ENCODE measurements at regions of chr11 and their contacts with region 1.

Region 1: DNA sequence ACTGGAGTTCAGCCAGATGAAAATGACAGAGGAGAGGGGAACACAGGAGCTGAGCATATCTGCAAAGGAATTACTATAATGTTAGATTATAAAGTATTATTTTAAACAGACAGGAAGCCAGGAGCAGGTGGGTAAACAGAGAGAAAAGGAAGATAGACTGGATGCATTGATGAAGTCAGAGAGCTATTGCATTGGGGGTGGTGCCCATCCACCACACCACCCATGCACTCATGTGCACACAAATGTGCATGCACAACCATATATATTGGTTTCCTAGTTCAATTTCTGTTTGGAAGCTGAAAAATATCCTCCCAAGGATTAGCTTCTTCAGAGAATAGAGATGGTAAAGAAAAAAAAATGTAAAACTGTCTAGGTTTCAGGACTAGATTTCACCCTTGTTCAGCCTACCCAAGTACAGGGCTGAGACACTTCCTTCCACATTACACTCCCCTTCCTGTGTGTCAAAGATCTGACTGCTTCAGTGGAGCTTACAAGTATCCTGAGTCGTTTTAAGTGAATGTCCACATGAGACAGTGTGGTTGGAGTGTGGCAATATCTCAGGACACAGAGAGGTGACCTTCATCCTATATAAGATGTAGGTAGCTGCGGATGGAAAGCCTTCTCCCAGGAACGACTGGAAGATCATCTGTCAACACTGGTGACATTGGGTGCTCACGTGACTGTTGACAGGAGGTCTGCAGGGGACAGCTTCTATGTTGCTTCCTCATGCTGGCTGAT is 12.2 kb upstream of the SMPD1 start:
- DNase-seq: peak in 1 of 5 donors; percentile 37
- H3K4me3 ChIP-seq: peak overlapping the region; percentile 32
- H3K4me3 Mint-ChIP-seq: peak overlapping the region in 2 of 7 donors; percentile 52 to 60
- H3K27ac ChIP-seq: no peak overlapping the region
- H3K27ac Mint-ChIP-seq: peak overlapping the region in 3 of 8 donors; percentile 51 to 78 (median 56)
- H3K4me1 ChIP-seq: peaks cover 21% of the 10 kb centered on the region
- H3K4me1 Mint-ChIP-seq: peaks cover 14 to 22% (median 17%) of the 10 kb centered on the region in 3 donors
- H3K27me3 ChIP-seq: no peaks in the 10 kb centered on the region
- H3K27me3 Mint-ChIP-seq: no peaks in the 10 kb centered on the region

Region 2: GRCh38 chr11:6353367-6353987 is 24.6 kb before region 1 on chr11:
- CTCF ChIA-PET with region 1: interaction called, 10 read pairs
- POLR2A ChIA-PET with region 1: no interaction called
- DNase-seq: peak; percentile 23 to 65 (median 35)
- H3K4me3 ChIP-seq: no peak overlapping the region
- H3K4me3 Mint-ChIP-seq: peak overlapping the region in 1 of 7 donors; percentile 28
- H3K27ac ChIP-seq: no peak overlapping the region
- H3K27ac Mint-ChIP-seq: no peak overlapping the region
- H3K4me1 ChIP-seq: no peaks in the 10 kb centered on the region
- H3K4me1 Mint-ChIP-seq: peaks cover 0 to 3% (median 0%) of the 10 kb centered on the region in 3 donors
- H3K27me3 ChIP-seq: no peaks in the 10 kb centered on the region
- H3K27me3 Mint-ChIP-seq: peaks cover 0 to 3% of the 10 kb centered on the region in 2 donors

Region 3: DNA sequence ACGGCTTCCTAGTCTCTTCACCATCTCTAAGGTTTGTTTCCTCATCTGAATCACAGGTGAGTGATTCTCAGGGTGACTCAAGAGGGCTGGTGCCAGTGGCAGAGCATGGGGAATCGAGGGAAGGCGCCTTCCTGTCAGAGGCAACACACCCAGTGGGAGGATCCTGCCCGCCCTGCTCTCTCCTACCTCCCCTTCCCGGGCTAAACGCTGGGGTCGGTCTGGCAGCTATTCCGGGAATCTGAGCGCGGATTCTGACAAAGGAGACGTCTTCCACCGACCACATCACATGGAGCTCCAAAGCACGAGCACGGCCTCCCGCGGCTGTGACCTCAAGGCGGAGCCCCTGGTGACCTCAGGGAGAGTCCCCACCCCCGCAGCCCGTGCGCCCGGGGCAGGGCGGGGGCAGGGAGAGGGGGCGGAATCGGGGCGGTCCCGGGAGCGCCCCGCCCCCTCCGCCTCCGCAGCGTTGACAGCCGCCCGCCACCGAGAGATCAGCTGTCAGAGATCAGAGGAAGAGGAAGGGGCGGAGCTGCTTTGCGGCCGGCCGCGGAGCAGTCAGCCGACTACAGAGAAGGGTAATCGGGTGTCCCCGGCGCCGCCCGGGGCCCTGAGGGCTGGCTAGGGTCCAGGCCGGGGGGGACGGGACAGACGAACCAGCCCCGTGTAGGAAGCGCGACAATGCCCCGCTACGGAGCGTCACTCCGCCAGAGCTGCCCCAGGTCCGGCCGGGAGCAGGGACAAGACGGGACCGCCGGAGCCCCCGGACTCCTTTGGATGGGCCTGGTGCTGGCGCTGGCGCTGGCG is 12.1 kb after region 1 on chr11 and contains the start of gene SMPD1:
- CTCF ChIA-PET with region 1: interaction called, 51 read pairs
- POLR2A ChIA-PET with region 1: interaction called, 3 read pairs
- DNase-seq: peak; percentile 91 to 97 (median 93)
- H3K4me3 ChIP-seq: peak within 1 kb of the TSS; percentile 64
- H3K4me3 Mint-ChIP-seq: peak within 1 kb of the TSS; percentile 85 to 96 (median 93)
- H3K27ac ChIP-seq: peak within 1 kb of the TSS; percentile 71
- H3K27ac Mint-ChIP-seq: peak within 1 kb of the TSS; percentile 89 to 100 (median 98)
- H3K4me1 ChIP-seq: peaks cover 48% of the 10 kb centered on the region
- H3K4me1 Mint-ChIP-seq: peaks cover 43 to 64% (median 47%) of the 10 kb centered on the region in 3 donors
- H3K27me3 ChIP-seq: no peaks in the 10 kb centered on the region
- H3K27me3 Mint-ChIP-seq: no peaks in the 10 kb centered on the region
- total RNA-seq, gene SMPD1: 30.4 to 30.9 TPM

Region 4: DNA sequence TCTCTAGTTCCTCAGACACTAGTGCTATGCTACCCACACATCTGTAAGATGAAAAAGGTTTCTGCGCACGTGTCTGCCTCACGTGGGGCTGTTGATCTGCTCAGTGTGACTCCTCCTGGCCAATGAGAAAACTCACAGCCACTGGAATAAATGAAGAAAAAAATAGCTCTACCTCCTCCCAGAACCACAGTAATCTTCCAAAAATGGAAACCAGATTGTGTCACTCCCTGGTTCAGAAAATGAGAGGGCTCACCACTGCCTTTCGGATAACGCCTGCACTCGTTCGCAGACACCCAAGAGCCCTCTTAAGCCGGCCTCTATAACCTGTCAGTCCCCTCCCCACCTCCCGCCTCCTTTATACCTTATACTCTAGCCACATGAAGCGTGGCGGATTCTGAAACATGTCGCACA is 35.7 kb after region 1 on chr11:
- CTCF ChIA-PET with region 1: interaction called, 25 read pairs
- POLR2A ChIA-PET with region 1: interaction called, 3 read pairs
- DNase-seq: peak in 3 of 5 donors; percentile 36 to 86 (median 64)
- H3K4me3 ChIP-seq: peak overlapping the region; percentile 43
- H3K4me3 Mint-ChIP-seq: no peak overlapping the region
- H3K27ac ChIP-seq: no peak overlapping the region
- H3K27ac Mint-ChIP-seq: peak overlapping the region in 2 of 8 donors; percentile 37 to 85
- H3K4me1 ChIP-seq: peaks cover 79% of the 10 kb centered on the region
- H3K4me1 Mint-ChIP-seq: peaks cover 13 to 35% (median 20%) of the 10 kb centered on the region in 3 donors
- H3K27me3 ChIP-seq: no peaks in the 10 kb centered on the region
- H3K27me3 Mint-ChIP-seq: no peaks in the 10 kb centered on the region

Region 5: GRCh38 chr11:6431861-6432260 is 53.8 kb after region 1 on chr11:
- CTCF ChIA-PET with region 1: interaction called, 467 read pairs
- POLR2A ChIA-PET with region 1: no interaction called
- DNase-seq: no peak
- H3K4me3 ChIP-seq: no peak overlapping the region
- H3K4me3 Mint-ChIP-seq: no peak overlapping the region
- H3K27ac ChIP-seq: no peak overlapping the region
- H3K27ac Mint-ChIP-seq: peak overlapping the region in 1 of 8 donors; percentile 35
- H3K4me1 ChIP-seq: no peaks in the 10 kb centered on the region
- H3K4me1 Mint-ChIP-seq: no peaks in the 10 kb centered on the region
- H3K27me3 ChIP-seq: no peaks in the 10 kb centered on the region
- H3K27me3 Mint-ChIP-seq: peaks cover 0 to 1% of the 10 kb centered on the region in 2 donors

Region 6: GRCh38 chr11:6452219-6452618 is 74.1 kb after region 1 on chr11:
- CTCF ChIA-PET with region 1: interaction called, 467 read pairs
- POLR2A ChIA-PET with region 1: interaction called, 3 read pairs
- DNase-seq: no peak
- H3K4me3 ChIP-seq: no peak overlapping the region
- H3K4me3 Mint-ChIP-seq: no peak overlapping the region
- H3K27ac ChIP-seq: no peak overlapping the region
- H3K27ac Mint-ChIP-seq: peak overlapping the region in 1 of 8 donors; percentile 5
- H3K4me1 ChIP-seq: no peaks in the 10 kb centered on the region
- H3K4me1 Mint-ChIP-seq: no peaks in the 10 kb centered on the region
- H3K27me3 ChIP-seq: no peaks in the 10 kb centered on the region
- H3K27me3 Mint-ChIP-seq: peaks cover 0 to 3% of the 10 kb centered on the region in 2 donors

Region 7: DNA sequence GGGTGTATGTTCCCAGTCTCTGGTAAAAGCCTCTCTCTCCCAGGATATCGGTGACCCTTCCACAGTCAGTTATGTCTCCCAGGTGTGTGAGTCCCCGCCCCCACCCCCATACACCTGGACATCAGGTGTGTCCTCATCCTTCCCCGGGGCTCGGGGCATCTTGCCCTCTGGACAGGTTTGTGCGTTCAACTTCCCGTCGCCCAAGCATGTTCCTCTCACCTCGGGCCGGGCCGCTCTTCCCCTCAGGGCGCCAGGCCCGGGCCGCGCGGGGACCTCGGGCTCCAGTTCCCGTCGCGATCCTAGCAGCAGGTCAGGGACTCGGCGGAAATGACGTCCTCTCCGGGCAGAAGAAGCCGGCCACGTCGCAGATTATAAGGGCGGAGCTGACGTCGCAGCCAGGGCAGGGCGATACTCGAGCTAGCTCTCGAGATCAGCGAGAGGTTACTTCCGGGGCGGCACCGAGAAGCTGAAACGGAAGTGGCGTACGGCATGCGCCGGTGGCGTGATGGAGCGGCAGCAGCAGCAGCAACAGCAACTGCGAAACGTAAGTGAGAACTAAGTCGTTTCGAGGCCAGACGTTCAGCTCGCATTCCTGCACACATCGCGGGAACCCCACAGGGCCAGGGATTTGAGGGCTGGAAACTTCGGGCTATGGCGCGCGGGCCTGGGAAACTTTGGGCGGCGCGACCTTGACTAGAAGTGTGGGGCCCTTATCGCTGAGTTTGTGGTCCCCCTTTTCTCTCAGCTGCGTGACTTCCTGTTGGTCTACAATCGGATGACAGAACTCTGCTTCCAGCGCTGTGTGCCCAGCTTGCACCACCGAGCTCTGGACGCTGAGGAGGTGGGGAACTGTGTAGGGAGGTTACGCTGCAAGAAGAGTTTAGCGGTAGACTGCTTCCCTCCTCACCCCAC is 103.2 kb after region 1 on chr11 and contains the starts of genes ARFIP2 and TIMM10B:
- CTCF ChIA-PET with region 1: interaction called, 32 read pairs
- POLR2A ChIA-PET with region 1: interaction called, 8 read pairs
- DNase-seq: peak; percentile 93 to 97 (median 94)
- H3K4me3 ChIP-seq: peak within 1 kb of the TSS; percentile 72
- H3K4me3 Mint-ChIP-seq: peak within 1 kb of the TSS; percentile 92 to 99 (median 97)
- H3K27ac ChIP-seq: peak within 1 kb of the TSS; percentile 94
- H3K27ac Mint-ChIP-seq: peak within 1 kb of the TSS; percentile 96 to 99 (median 98)
- H3K4me1 ChIP-seq: peaks cover 28% of the 10 kb centered on the region
- H3K4me1 Mint-ChIP-seq: peaks cover 35 to 47% (median 44%) of the 10 kb centered on the region in 3 donors
- H3K27me3 ChIP-seq: no peaks in the 10 kb centered on the region
- H3K27me3 Mint-ChIP-seq: no peaks in the 10 kb centered on the region
- total RNA-seq, gene ARFIP2: 46.9 to 47.5 TPM
- total RNA-seq, gene TIMM10B: 43.6 to 46.3 TPM

Measured in CD8-positive, alpha-beta memory T cell (primary cell).